ENCODE measurements at regions of chr12 and their contacts with region 1.

Region 1: GRCh38 chr12:31728917-31729640 is at the start of gene AMN1:
- DNase-seq: peak; percentile 94 to 100 (median 95)
- ATAC-seq: peak; percentile 94
- H3K4me3 ChIP-seq: peak within 1 kb of the TSS; percentile 84
- H3K4me3 Mint-ChIP-seq: peak within 1 kb of the TSS; percentile 94 to 100 (median 98)
- H3K27ac ChIP-seq: peak within 1 kb of the TSS; percentile 86
- H3K27ac Mint-ChIP-seq: peak within 1 kb of the TSS; percentile 96 to 100 (median 99)
- H3K4me1 ChIP-seq: peaks cover 8 to 18% of the 10 kb centered on the region in 2 donors
- H3K4me1 Mint-ChIP-seq: peaks cover 26 to 79% (median 61%) of the 10 kb centered on the region in 7 donors
- H3K27me3 ChIP-seq: no peaks in the 10 kb centered on the region
- H3K27me3 Mint-ChIP-seq: peaks cover 0 to 2% (median 0%) of the 10 kb centered on the region in 5 donors
- total RNA-seq, gene AMN1: 4.1 to 22.9 (median 8.1) TPM

Region 2: GRCh38 chr12:30754709-30755394 is 974.2 kb before region 1 on chr12 and contains the start of gene CAPRIN2:
- CTCF ChIA-PET with region 1: no interaction called
- POLR2A ChIA-PET with region 1: no interaction called
- intact Hi-C with region 1: loop called in 1 of 2 experiments (anchors 2 kb)
- DNase-seq: peak; percentile 89 to 97 (median 92)
- ATAC-seq: peak; percentile 96
- H3K4me3 ChIP-seq: peak within 1 kb of the TSS; percentile 67
- H3K4me3 Mint-ChIP-seq: peak within 1 kb of the TSS; percentile 93 to 99 (median 96)
- H3K27ac ChIP-seq: peak within 1 kb of the TSS; percentile 63
- H3K27ac Mint-ChIP-seq: peak within 1 kb of the TSS; percentile 80 to 93 (median 90)
- H3K4me1 ChIP-seq: peaks cover 13 to 29% of the 10 kb centered on the region in 2 donors
- H3K4me1 Mint-ChIP-seq: peaks cover 22 to 53% (median 46%) of the 10 kb centered on the region in 7 donors
- H3K27me3 ChIP-seq: no peaks in the 10 kb centered on the region
- H3K27me3 Mint-ChIP-seq: no peaks in the 10 kb centered on the region
- total RNA-seq, gene CAPRIN2: 13.7 to 50.1 (median 28.9) TPM

Region 3: DNA sequence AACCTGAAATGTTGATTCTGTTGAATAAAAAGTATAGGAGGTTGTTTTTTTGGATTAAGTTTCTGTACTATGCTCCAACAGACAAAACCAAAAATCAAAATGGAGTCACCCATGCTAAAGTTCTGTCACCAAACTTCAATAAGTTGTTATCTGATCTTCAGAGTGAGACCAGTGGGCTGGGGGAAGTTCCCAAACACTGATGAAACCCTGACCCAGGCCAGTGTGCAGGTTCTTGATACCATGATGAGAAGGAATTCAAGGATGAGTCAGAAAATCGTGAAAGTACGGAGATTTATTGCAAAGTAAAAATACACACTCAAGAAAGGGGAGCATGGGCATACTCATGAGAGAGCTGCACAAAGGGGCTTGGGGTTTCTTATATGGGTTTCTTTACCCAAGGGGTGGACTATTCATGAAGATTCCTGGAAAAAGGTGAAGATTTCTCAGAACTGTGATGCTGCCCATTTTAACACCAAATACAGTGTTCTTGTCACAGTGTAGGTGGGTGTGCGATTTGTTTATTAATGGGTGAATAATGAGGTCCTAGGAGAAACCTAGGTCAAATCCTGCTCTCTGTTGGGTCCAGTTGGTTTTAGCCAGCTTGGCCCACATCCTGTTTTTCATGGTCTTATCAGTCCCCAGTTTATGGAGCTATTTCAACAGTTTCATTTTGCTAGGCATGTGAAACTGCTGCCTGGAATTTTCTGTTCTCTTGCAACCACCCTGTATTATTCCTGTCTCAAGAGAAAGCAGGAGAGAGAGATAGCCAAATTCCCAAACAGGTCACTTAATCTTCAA is 110.7 kb before region 1 on chr12:
- CTCF ChIA-PET with region 1: no interaction called
- POLR2A ChIA-PET with region 1: no interaction called
- intact Hi-C with region 1: no loop called
- DNase-seq: no peak
- ATAC-seq: no peak
- H3K4me3 ChIP-seq: no peak overlapping the region
- H3K4me3 Mint-ChIP-seq: no peak overlapping the region
- H3K27ac ChIP-seq: no peak overlapping the region
- H3K27ac Mint-ChIP-seq: no peak overlapping the region
- H3K4me1 ChIP-seq: no peaks in the 10 kb centered on the region
- H3K4me1 Mint-ChIP-seq: no peaks in the 10 kb centered on the region
- H3K27me3 ChIP-seq: no peaks in the 10 kb centered on the region
- H3K27me3 Mint-ChIP-seq: peaks cover 0 to 6% (median 4%) of the 10 kb centered on the region in 5 donors

Region 4: DNA sequence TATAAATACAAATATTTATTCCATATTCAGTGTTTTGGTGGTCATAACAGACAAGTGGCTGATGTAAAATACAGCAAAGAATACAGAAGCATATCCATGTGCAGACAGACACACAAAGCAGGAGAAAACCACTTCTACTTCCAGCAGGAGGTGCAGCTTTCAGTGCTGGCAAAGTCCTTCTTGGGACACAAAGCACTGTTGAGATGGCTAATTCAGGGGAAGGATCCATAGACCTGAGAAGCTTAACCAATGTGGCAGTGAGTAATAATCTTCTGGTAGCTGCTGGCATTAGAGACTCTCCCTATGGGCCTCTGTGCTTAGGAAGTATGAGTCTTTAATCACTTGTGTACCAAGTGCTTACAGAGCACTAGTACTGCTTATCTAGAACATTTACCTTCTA is 27.0 kb before region 1 on chr12:
- CTCF ChIA-PET with region 1: no interaction called
- POLR2A ChIA-PET with region 1: no interaction called
- intact Hi-C with region 1: loop called in 1 of 2 experiments (anchors 2 kb)
- DNase-seq: no peak
- ATAC-seq: no peak
- H3K4me3 ChIP-seq: no peak overlapping the region
- H3K4me3 Mint-ChIP-seq: no peak overlapping the region
- H3K27ac ChIP-seq: no peak overlapping the region
- H3K27ac Mint-ChIP-seq: peak overlapping the region in 2 of 9 donors; percentile 24 to 61
- H3K4me1 ChIP-seq: peaks cover 0 to 12% of the 10 kb centered on the region in 2 donors
- H3K4me1 Mint-ChIP-seq: peaks cover 12 to 45% (median 34%) of the 10 kb centered on the region in 7 donors
- H3K27me3 ChIP-seq: no peaks in the 10 kb centered on the region
- H3K27me3 Mint-ChIP-seq: no peaks in the 10 kb centered on the region

Region 5: GRCh38 chr12:31874961-31875608 is 146.0 kb after region 1 on chr12:
- CTCF ChIA-PET with region 1: no interaction called
- POLR2A ChIA-PET with region 1: interaction called, 4 read pairs
- intact Hi-C with region 1: loop called (anchors 1 to 2 kb)
- DNase-seq: peak; percentile 17 to 84 (median 63)
- ATAC-seq: peak; percentile 96
- H3K4me3 ChIP-seq: no peak overlapping the region
- H3K4me3 Mint-ChIP-seq: peak overlapping the region; percentile 53 to 84 (median 72)
- H3K27ac ChIP-seq: peak overlapping the region; percentile 90
- H3K27ac Mint-ChIP-seq: peak overlapping the region; percentile 95 to 100 (median 98)
- H3K4me1 ChIP-seq: peaks cover 12 to 29% of the 10 kb centered on the region in 2 donors
- H3K4me1 Mint-ChIP-seq: peaks cover 29 to 66% (median 55%) of the 10 kb centered on the region in 7 donors
- H3K27me3 ChIP-seq: no peaks in the 10 kb centered on the region
- H3K27me3 Mint-ChIP-seq: no peaks in the 10 kb centered on the region

Region 6: DNA sequence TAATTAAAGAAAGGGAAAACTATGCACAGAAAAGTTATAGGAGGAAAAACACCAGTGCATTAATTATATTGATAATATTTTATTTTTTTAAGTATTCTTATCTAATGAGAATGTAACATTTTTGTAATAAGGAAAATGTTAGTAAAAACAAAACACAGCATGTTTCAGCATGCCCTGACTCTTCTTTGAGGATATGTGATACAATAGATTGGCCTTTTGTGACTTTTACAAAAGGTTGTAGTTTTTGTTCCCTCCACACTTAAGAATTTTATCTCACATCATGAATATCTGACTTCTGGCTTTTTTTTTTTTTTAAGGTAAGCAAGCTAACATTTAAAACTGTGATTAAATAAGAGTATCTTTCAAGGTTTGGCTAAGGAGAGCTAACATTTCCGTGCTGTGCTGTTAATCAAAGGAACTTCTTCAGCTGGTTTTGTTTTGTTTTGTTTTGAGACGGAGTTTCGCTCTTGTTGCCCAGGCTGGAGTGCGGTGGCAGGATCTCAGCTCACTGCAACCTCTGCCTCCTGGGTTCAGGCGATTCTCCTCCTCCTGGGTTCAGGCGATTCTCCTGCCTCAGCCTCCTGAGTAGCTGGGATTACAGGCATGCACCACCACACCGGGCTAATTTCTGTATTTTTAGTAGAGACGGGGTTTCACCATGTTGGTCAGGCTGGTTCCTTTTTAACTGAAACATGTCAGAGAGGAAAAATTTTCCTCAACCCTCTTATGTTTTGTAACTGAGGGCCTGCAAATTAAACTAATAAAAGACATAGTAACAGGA is 199.4 kb after region 1 on chr12:
- CTCF ChIA-PET with region 1: no interaction called
- POLR2A ChIA-PET with region 1: interaction called, 6 read pairs
- intact Hi-C with region 1: loop called in 1 of 2 experiments (anchors 1 kb)
- DNase-seq: peak in 8 of 9 donors; percentile 23 to 64 (median 49)
- ATAC-seq: peak; percentile 70
- H3K4me3 ChIP-seq: peak overlapping the region; percentile 26
- H3K4me3 Mint-ChIP-seq: peak overlapping the region; percentile 79 to 94 (median 90)
- H3K27ac ChIP-seq: peak overlapping the region; percentile 62
- H3K27ac Mint-ChIP-seq: peak overlapping the region; percentile 94 to 100 (median 97)
- H3K4me1 ChIP-seq: peaks cover 30 to 42% of the 10 kb centered on the region in 2 donors
- H3K4me1 Mint-ChIP-seq: peaks cover 27 to 58% (median 50%) of the 10 kb centered on the region in 7 donors
- H3K27me3 ChIP-seq: no peaks in the 10 kb centered on the region
- H3K27me3 Mint-ChIP-seq: no peaks in the 10 kb centered on the region

Region 7: GRCh38 chr12:32679091-32679919 is 950.2 kb after region 1 on chr12 and contains the start of gene DNM1L:
- CTCF ChIA-PET with region 1: no interaction called
- POLR2A ChIA-PET with region 1: no interaction called
- intact Hi-C with region 1: loop called in 1 of 2 experiments (anchors 2 kb)
- DNase-seq: peak; percentile 85 to 93 (median 92)
- ATAC-seq: peak; percentile 99
- H3K4me3 ChIP-seq: peak within 1 kb of the TSS; percentile 83
- H3K4me3 Mint-ChIP-seq: peak within 1 kb of the TSS; percentile 83 to 97 (median 93)
- H3K27ac ChIP-seq: peak within 1 kb of the TSS; percentile 82
- H3K27ac Mint-ChIP-seq: peak within 1 kb of the TSS; percentile 59 to 95 (median 89)
- H3K4me1 ChIP-seq: peaks cover 9 to 11% of the 10 kb centered on the region in 2 donors
- H3K4me1 Mint-ChIP-seq: peaks cover 16 to 39% (median 31%) of the 10 kb centered on the region in 7 donors
- H3K27me3 ChIP-seq: no peaks in the 10 kb centered on the region
- H3K27me3 Mint-ChIP-seq: no peaks in the 10 kb centered on the region
- total RNA-seq, gene DNM1L: 41.6 to 68.4 (median 58.9) TPM

Measured in naive thymus-derived CD4-positive, alpha-beta T cell (primary cell).